ENCODE measurements at regions of chr17 and their contacts with region 1.

Region 1: DNA sequence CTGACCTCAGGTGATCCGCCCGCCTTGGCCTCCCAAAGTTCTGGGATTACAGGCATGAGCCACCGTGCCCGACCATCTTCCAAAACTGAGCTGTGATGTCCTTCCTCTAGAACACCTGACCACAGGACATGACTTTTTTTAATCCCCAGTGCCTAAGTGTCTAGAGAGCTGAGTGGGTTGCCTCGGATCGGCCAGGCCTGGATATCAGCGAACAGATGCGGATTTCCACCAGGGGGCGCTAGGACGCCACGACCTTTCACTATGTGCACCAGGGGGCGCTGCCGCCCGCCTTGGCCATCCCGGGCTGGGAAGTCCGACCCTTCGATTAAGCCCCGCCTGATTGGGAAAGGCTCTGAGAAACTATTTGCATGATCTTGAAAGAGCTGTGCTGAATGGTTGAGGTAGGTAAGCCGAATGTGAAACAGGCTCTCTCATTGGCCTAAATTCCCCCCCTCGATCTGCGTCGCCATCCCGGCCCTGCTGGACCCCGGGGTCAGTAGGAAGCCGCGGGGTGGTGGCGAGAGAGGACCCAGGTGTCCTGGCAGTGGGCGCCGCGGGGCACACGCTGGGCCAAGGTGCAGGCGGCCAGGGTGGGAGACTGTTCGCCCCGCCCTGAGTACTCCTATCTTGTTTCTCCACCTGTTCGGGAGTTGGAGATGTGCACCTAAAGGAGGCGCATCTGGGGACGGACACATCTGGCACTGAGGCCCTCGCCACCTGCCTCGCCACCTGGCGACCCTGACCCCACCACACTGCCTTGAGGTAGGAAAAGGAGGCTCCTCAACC is at the start of gene ACBD4:
- DNase-seq: peak; percentile 98
- H3K4me3 Mint-ChIP-seq: peak within 1 kb of the TSS; percentile 90
- H3K27ac Mint-ChIP-seq: peak within 1 kb of the TSS; percentile 75
- H3K4me1 Mint-ChIP-seq: peaks cover 8% of the 10 kb centered on the region
- H3K27me3 Mint-ChIP-seq: peaks cover 4% of the 10 kb centered on the region
- total RNA-seq, gene ACBD4: 12.3 to 12.7 TPM

Region 2: DNA sequence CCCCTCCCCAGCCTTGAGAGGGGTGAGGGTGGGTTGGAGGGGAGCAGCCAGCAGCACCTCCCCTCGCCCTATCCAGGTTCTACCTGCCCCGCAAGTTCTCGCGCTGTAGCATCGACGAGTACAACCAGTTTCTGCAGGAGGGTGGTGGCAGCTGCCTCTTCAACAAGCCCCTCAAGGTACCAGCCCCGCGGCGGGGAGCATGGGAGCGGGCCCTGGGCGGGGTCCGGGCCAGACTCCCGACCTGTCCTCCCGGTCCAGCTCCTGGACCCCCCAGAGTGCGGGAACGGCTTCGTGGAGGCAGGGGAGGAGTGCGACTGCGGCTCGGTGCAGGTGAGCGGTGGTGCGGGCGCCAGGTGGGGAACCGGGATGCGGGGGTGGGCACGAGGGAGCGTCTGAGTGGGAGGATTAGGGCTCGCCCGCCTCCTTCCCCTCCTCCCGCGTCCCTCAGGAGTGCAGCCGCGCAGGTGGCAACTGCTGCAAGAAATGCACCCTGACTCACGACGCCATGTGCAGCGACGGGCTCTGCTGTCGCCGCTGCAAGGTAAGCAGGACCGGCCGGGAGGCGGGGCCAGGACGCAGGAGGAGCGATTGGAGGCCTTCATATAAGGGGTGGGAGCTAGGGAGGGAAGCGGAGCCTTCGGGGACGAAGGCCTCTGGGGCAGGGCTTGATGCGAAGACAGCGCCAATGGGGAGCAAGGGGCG is 360.1 kb before region 1 on chr17:
- CTCF ChIA-PET with region 1: no interaction called
- intact Hi-C with region 1: loop called (anchors 1 kb)
- DNase-seq: peak; percentile 99
- H3K4me3 Mint-ChIP-seq: peak overlapping the region; percentile 83
- H3K27ac Mint-ChIP-seq: no peak overlapping the region
- H3K4me1 Mint-ChIP-seq: peaks cover 2% of the 10 kb centered on the region
- H3K27me3 Mint-ChIP-seq: peaks cover 7% of the 10 kb centered on the region

Region 3: GRCh38 chr17:45051060-45051719 is 84.2 kb before region 1 on chr17 and contains the start of gene DCAKD:
- CTCF ChIA-PET with region 1: interaction called, 10 read pairs
- intact Hi-C with region 1: loop called (anchors 1 kb)
- DNase-seq: peak; percentile 93
- H3K4me3 Mint-ChIP-seq: peak within 1 kb of the TSS; percentile 82
- H3K27ac Mint-ChIP-seq: peak within 1 kb of the TSS; percentile 93
- H3K4me1 Mint-ChIP-seq: peaks cover 41% of the 10 kb centered on the region
- H3K27me3 Mint-ChIP-seq: no peaks in the 10 kb centered on the region
- total RNA-seq, gene DCAKD: 38.1 to 38.9 TPM

Region 4: DNA sequence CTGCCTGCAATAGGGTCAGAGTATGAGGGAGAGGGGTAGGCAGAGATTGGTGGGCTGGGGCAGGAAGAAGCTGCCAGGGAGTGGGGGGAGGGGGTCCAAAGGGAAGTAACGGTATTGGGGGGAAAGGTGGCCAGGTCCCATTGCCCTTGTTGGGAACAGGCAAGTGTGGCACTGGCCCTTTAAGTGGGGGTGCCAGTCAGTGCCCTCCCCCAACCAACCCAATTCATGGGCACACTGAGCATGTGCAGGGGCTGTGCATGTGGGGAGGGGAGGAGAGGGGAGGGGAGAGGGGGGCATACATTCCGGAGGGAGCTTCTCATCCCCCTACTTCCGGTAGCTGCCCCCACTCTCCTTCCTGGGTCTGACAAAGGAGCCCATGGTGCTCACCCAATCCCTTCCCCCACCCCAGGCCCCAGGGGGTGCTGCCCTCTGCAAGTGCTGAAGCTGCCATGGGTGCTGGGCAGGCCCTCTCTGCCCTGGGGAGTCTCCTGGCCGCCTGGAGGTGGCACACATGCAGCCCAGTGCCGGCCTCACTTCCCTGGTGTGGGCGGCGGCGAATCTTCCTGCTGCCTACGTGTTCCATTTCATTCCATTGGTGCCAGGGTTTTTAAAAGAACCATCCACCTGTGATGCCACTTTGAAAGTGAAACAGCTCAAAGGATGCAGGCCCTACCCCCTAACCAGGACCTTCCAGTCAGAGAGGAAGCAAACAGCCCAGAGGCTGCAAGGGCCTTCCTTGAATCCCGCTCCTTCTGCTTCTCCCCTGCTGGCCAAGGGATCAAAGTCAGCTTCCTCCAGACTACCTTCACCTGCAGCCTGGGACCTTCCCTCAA is 37.3 kb after region 1 on chr17:
- CTCF ChIA-PET with region 1: interaction called, 41 read pairs
- intact Hi-C with region 1: no loop called
- DNase-seq: peak; percentile 65
- H3K4me3 Mint-ChIP-seq: peak overlapping the region; percentile 71
- H3K27ac Mint-ChIP-seq: peak overlapping the region; percentile 93
- H3K4me1 Mint-ChIP-seq: peaks cover 21% of the 10 kb centered on the region
- H3K27me3 Mint-ChIP-seq: no peaks in the 10 kb centered on the region

Region 5: DNA sequence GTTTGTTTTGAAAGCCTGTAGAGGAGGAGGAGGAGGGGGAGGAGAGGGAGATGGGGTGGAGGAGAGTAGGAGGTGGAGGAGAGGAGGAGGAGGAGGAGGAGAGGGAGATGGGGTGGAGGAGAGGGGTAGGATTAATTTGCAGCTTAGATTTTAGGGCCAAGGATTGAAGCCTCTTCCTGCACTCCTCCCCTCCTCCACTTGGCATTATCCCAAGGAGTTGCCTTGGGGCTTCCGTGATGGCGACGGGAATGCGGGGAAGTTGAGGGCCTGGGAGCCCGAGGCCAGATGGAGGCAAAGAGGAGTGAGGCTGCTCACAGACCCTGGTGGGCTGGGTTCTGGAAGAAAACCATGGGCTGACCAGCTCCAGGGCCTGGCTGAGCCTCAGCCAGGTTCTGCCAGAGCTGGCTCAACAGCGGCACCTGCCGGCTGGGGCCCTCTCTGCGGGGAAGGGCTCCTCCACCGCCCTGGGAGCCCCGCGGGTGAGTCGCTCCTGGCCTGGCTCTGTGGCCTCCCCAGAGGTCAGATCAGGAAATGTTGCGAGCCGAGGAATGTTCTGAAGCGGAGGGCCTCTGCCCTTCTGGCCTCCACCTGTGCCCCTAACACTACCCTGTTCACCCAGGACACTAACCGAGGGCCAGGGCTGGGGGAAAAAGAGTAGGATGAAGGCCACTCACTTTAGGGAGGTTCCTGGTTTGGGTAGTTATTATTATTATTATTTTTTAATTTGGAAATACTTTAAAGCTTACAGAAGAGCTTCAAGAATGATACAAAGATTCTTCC is 62.4 kb after region 1 on chr17:
- CTCF ChIA-PET with region 1: interaction called, 255 read pairs
- intact Hi-C with region 1: loop called (anchors 1 kb)
- DNase-seq: peak; percentile 94
- H3K4me3 Mint-ChIP-seq: no peak overlapping the region
- H3K27ac Mint-ChIP-seq: no peak overlapping the region
- H3K4me1 Mint-ChIP-seq: peaks cover 3% of the 10 kb centered on the region
- H3K27me3 Mint-ChIP-seq: no peaks in the 10 kb centered on the region

Region 6: DNA sequence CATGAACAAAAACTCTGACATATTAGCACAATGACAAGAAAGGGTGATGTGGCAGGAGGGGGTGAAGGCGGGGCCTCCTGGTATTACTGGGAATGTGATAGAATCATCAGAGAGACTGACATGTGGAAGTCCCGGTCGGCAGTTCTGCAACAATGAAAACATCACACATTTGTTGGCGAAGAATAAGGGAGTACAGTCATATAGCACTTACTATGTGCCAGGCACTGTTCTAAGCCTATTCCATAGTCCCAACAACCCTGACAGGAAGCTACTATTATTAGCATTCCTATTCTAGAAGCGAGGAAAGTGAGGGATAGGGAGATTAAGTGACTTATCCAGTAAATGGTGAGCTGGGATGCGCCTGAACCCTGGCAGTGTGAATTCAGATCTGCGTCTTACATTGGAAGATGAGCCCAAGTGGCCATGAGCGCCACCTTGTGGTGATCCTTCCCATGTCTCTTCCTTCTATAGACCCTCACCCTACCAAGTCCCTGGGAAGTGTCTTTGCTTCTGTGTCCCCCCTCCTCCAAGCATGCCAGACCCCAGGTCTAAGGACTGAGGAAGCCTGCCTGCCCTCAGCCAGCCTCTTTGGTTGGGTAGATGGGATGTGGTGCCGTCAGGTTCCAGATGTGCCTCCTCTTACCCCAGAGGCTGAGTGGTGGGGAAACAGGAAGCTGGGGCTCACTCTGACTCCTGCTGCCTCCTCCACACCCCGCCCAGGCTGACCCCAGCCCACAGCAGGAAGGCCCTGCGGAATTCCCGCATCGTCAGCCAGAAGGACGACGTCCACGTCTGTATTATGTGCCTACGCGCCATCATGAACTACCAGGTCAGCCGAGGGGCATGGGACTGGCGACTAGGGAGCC is 100.3 kb after region 1 on chr17:
- CTCF ChIA-PET with region 1: interaction called, 10 read pairs
- intact Hi-C with region 1: no loop called
- DNase-seq: peak; percentile 89
- H3K4me3 Mint-ChIP-seq: no peak overlapping the region
- H3K27ac Mint-ChIP-seq: peak overlapping the region; percentile 89
- H3K4me1 Mint-ChIP-seq: peaks cover 50% of the 10 kb centered on the region
- H3K27me3 Mint-ChIP-seq: no peaks in the 10 kb centered on the region

Region 7: GRCh38 chr17:45293413-45294211 is 158.2 kb after region 1 on chr17:
- CTCF ChIA-PET with region 1: no interaction called
- intact Hi-C with region 1: no loop called
- DNase-seq: peak; percentile 60
- H3K4me3 Mint-ChIP-seq: no peak overlapping the region
- H3K27ac Mint-ChIP-seq: peak overlapping the region; percentile 68
- H3K4me1 Mint-ChIP-seq: peaks cover 57% of the 10 kb centered on the region
- H3K27me3 Mint-ChIP-seq: no peaks in the 10 kb centered on the region

Measured in activated naive CD4-positive, alpha-beta T cell treated with anti-CD3 and anti-CD28 coated beads for 36 hours (primary cell).